Head of caudate nucleus (tissue), 42 donors: ENCODE measurements at regions of chr7 and their contacts with region 1.

Region 1: GRCh38 chr7:32357535-32358277 is 132.5 kb downstream of the LSM5 start:
- DNase-seq: peak in 7 of 42 donors; percentile 9 to 55 (median 23)

Region 2: GRCh38 chr7:31744294-31744874 is 613.3 kb before region 1 on chr7:
- intact Hi-C with region 1: loop called (anchors 10 kb)
- DNase-seq: peak; percentile 44 to 92 (median 82)

Region 3: GRCh38 chr7:32470871-32471270 is 113.2 kb after region 1 on chr7:
- intact Hi-C with region 1: no loop called
- DNase-seq: no peak